Mammary epithelial cell (primary cell): ENCODE measurements at regions of chr12 and their contacts with region 1.

Region 1: DNA sequence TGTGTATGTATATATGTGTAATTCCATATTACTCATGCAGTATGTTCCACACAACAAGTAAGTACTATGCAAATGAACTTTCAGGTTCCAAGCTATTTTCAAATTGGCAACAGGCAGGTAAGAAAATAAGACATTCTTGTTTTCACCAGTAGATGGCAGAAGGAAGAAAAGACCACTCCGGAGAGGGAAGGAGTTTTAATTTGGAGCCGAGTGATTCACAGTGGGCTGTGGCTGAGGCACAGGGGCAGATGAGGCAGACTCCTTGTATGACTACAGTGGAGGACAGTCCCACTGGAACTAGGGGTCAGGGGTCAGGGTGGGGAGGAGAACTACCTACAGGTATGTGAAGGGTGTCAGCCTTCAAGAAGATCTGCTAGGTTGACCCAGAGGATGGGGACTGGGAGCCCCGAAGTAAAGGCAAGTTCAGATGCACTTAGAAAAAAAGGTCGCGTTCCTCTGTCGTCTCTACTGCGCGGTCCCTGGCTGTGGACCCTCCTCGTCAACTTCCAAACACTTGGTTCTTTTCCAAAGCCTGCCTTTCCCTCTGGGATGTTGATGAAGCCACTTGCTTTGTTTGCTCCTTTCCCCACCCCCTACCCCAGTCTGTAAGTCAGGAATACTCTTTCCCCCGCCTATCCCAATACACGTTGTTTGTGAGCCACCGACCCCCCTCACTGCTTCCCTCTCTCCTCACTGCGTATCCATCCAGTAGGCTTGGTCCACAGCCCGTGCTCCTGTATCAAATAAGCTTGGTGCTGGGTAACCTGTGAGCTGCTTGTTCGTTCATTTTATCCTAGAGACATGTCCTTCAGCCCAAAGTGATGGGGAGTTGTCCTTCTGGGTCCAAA is 24.1 kb downstream of the DDX47 start:
- DNase-seq: peak; percentile 91
- H3K4me3 ChIP-seq: no peak overlapping the region
- H3K27ac ChIP-seq: peak overlapping the region; percentile 99
- H3K4me1 ChIP-seq: peaks cover 68% of the 10 kb centered on the region
- H3K27me3 ChIP-seq: no peaks in the 10 kb centered on the region
- CTCF ChIP-seq: peak; percentile 67 to 69

Region 2: GRCh38 chr12:12872139-12872881 is 35.1 kb after region 1 on chr12:
- CTCF ChIA-PET with region 1: interaction called, 4 read pairs
- dilution Hi-C with region 1: loop called (anchors 5 kb)
- in situ Hi-C with region 1: no loop called
- intact Hi-C with region 1: loop called (anchors 1 kb)
- DNase-seq: peak; percentile 98
- H3K4me3 ChIP-seq: peak overlapping the region in 1 of 3 experiments; percentile 3
- H3K27ac ChIP-seq: peak overlapping the region; percentile 89
- H3K4me1 ChIP-seq: peaks cover 39% of the 10 kb centered on the region
- H3K27me3 ChIP-seq: no peaks in the 10 kb centered on the region
- CTCF ChIP-seq: no peak

Region 3: GRCh38 chr12:12899530-12900380 is 62.5 kb after region 1 on chr12:
- CTCF ChIA-PET with region 1: interaction called, 3 read pairs
- dilution Hi-C with region 1: loop called (anchors 5 kb)
- in situ Hi-C with region 1: loop called in 1 of 2 experiments (anchors 5 kb)
- intact Hi-C with region 1: loop called (anchors 1 kb)
- DNase-seq: peak; percentile 79
- H3K4me3 ChIP-seq: no peak overlapping the region
- H3K27ac ChIP-seq: peak overlapping the region; percentile 53
- H3K4me1 ChIP-seq: peaks cover 66% of the 10 kb centered on the region
- H3K27me3 ChIP-seq: no peaks in the 10 kb centered on the region
- CTCF ChIP-seq: no peak

Region 4: DNA sequence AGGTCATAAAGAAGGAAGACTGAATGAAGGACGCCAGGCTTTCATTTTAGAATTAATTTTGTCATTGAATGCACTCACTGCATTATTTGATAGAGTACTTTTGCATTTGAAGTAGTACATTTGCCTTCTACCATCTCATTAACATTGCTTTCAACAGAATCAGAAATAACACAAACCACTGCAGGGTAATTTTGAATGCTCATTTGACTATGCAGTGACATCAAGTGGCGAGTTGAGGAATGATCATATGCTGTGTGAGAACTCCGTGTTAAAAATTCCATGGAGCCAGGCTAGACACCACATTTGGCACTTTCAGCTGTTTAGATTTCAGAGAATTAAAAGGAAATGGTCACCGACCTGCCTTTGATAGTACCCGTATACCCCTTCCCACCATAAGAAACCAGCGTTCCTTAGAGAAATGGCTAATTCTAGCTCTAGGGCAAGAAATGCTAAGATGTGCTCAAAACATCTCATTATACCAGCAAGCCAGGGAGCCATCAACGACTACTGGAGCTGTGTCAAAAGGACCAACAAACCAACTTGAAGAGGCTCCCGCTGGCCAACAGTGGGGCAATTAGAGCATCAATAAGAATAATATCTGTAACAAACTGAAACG is 146.3 kb after region 1 on chr12:
- CTCF ChIA-PET with region 1: interaction called, 4 read pairs
- dilution Hi-C with region 1: no loop called
- in situ Hi-C with region 1: loop called in 1 of 2 experiments (anchors 25 kb)
- intact Hi-C with region 1: loop called (anchors 1 kb)
- DNase-seq: peak; percentile 37
- H3K4me3 ChIP-seq: no peak overlapping the region
- H3K27ac ChIP-seq: no peak overlapping the region
- H3K4me1 ChIP-seq: no peaks in the 10 kb centered on the region
- H3K27me3 ChIP-seq: no peaks in the 10 kb centered on the region
- CTCF ChIP-seq: peak; percentile 55 to 75

Region 5: GRCh38 chr12:13094347-13094746 is 257.1 kb after region 1 on chr12:
- CTCF ChIA-PET with region 1: no interaction called
- dilution Hi-C with region 1: no loop called
- in situ Hi-C with region 1: no loop called
- intact Hi-C with region 1: loop called (anchors 10 kb)
- DNase-seq: peak; percentile 54
- H3K4me3 ChIP-seq: no peak overlapping the region
- H3K27ac ChIP-seq: peak overlapping the region; percentile 54
- H3K4me1 ChIP-seq: peaks cover 41% of the 10 kb centered on the region
- H3K27me3 ChIP-seq: no peaks in the 10 kb centered on the region
- CTCF ChIP-seq: no peak

Region 6: GRCh38 chr12:13546231-13546630 is 709.0 kb after region 1 on chr12:
- CTCF ChIA-PET with region 1: no interaction called
- dilution Hi-C with region 1: no loop called
- in situ Hi-C with region 1: no loop called
- intact Hi-C with region 1: no loop called
- DNase-seq: no peak
- H3K4me3 ChIP-seq: no peak overlapping the region
- H3K27ac ChIP-seq: no peak overlapping the region
- H3K4me1 ChIP-seq: no peaks in the 10 kb centered on the region
- H3K27me3 ChIP-seq: peaks cover 7% of the 10 kb centered on the region
- CTCF ChIP-seq: no peak